ENCODE measurements at regions of chr2 and their contacts with region 1.

Region 1: GRCh38 chr2:68385220-68385906 is 20.3 kb downstream of the PLEK start:
- DNase-seq: peak; percentile 81
- ATAC-seq: peak; percentile 73
- H3K4me3 ChIP-seq: no peak overlapping the region
- H3K4me3 Mint-ChIP-seq: peak overlapping the region; percentile 58
- H3K27ac ChIP-seq: peak overlapping the region; percentile 95 to 98
- H3K27ac Mint-ChIP-seq: peak overlapping the region; percentile 92
- H3K4me1 ChIP-seq: peaks cover 75 to 84% of the 10 kb centered on the region in 2 donors
- H3K4me1 Mint-ChIP-seq: peaks cover 88% of the 10 kb centered on the region
- H3K27me3 ChIP-seq: no peaks in the 10 kb centered on the region
- H3K27me3 Mint-ChIP-seq: no peaks in the 10 kb centered on the region
- CTCF ChIP-seq: no peak

Region 2: DNA sequence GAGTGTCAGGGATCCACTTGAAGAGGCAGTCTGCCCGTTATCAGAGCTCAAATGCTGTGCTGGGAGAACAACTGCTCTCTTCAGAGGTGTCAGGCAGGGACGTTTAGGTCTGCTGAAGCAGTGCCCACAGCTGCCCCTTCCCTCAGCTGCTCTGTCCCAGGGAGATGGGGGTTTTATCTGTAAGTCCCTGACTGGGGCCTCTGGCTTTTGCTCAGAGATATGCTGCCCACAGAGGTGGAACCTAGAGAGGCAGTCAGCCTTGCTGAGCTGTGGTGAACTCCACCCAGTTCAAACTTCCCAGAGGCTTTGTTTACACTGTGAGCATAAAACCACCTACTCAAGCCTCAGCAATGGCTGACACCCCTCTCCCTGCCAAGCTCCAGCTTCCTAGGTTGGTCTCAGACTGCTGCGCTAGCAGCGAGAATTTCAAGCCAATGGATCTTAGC is 17.9 kb after region 1 on chr2:
- CTCF ChIA-PET with region 1: interaction called, 21 read pairs
- POLR2A ChIA-PET with region 1: interaction called, 9 read pairs
- intact Hi-C with region 1: no loop called
- DNase-seq: peak; percentile 73
- ATAC-seq: peak; percentile 81
- H3K4me3 ChIP-seq: peak overlapping the region in 1 of 5 experiments; percentile 38
- H3K4me3 Mint-ChIP-seq: peak overlapping the region; percentile 70
- H3K27ac ChIP-seq: peak overlapping the region; percentile 76 to 86
- H3K27ac Mint-ChIP-seq: peak overlapping the region; percentile 95
- H3K4me1 ChIP-seq: peaks cover 37 to 48% of the 10 kb centered on the region in 2 donors
- H3K4me1 Mint-ChIP-seq: peaks cover 88% of the 10 kb centered on the region
- H3K27me3 ChIP-seq: no peaks in the 10 kb centered on the region
- H3K27me3 Mint-ChIP-seq: no peaks in the 10 kb centered on the region
- CTCF ChIP-seq: no peak

Region 3: DNA sequence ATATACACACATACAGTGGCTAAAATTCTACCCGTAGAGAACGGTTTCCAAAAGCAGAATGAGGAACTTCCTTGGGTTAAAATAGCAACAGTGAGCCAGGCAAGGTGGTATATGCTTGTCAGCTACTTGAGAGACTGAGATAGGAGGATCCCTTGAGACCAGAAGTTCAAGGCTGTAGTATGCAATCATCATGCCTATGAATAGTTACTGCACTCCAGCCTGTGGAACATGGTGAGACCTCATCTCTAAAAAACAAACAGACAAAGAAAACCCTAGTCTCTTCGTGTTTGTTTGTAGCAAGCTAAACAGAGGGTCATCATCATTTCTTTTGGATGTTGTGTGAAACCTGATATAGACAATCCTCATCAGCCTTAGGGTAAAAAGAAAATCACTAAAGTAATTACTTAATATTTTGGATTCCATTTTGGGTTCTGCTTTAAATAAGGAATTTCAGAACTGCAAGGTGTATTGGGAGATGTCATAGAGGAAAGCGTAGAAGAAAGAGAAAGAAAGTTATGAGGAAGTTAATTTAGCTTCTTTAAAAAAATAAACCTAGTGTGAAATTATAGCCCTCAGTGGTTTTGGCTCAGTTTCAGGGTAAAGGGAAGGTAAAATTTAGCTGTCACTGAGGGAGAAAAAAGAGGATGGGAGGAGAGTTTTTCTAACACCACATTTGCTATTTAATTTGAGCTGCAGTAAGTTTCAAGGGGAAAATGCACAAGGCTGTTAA is 26.2 kb after region 1 on chr2:
- CTCF ChIA-PET with region 1: interaction called, 5 read pairs
- POLR2A ChIA-PET with region 1: interaction called, 4 read pairs
- intact Hi-C with region 1: loop called (anchors 1 kb)
- DNase-seq: peak; percentile 79
- ATAC-seq: peak; percentile 97
- H3K4me3 ChIP-seq: peak overlapping the region; percentile 24 to 60 (median 45)
- H3K4me3 Mint-ChIP-seq: peak overlapping the region; percentile 78
- H3K27ac ChIP-seq: peak overlapping the region; percentile 83 to 87
- H3K27ac Mint-ChIP-seq: peak overlapping the region; percentile 83
- H3K4me1 ChIP-seq: peaks cover 59 to 66% of the 10 kb centered on the region in 2 donors
- H3K4me1 Mint-ChIP-seq: peaks cover 91% of the 10 kb centered on the region
- H3K27me3 ChIP-seq: no peaks in the 10 kb centered on the region
- H3K27me3 Mint-ChIP-seq: no peaks in the 10 kb centered on the region
- CTCF ChIP-seq: no peak

Region 4: DNA sequence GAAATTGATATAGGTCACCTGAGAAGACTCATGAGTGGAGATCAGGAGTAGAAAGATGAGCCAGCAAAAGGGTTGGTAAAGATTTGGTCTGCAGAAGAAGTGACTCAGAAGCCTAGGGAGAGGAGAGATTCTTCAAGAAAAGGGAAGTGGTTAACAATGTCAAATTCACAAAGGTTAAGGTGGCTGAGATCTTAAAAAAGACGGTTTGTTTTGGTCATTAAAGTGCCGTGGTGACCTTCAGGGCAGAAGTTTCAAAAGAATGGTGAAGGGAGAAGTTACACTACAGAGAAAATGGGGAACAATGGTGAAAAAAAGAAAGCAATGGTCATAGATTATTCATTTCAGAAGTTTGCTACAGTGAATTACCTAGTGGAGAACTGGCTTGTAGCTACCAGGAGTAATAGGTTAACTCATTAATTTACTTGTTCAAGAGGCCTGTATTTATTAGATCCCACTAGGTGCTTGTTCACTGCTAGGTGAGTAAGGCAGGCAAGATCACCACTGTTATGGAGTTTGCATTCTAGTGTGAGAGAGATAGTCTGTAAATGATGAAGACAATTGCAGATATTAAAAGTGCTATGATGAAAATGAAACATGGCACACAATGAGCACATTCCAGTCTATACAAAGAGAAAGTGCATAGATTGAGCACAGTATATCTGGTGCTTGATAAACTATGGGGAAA is 38.7 kb after region 1 on chr2:
- CTCF ChIA-PET with region 1: interaction called, 3 read pairs
- POLR2A ChIA-PET with region 1: interaction called, 3 read pairs
- intact Hi-C with region 1: loop called (anchors 1 kb)
- DNase-seq: peak; percentile 74
- ATAC-seq: peak; percentile 81
- H3K4me3 ChIP-seq: peak overlapping the region in 2 of 5 experiments; percentile 3 to 29
- H3K4me3 Mint-ChIP-seq: no peak overlapping the region
- H3K27ac ChIP-seq: peak overlapping the region; percentile 37 to 54
- H3K27ac Mint-ChIP-seq: no peak overlapping the region
- H3K4me1 ChIP-seq: peaks cover 78 to 82% of the 10 kb centered on the region in 2 donors
- H3K4me1 Mint-ChIP-seq: peaks cover 57% of the 10 kb centered on the region
- H3K27me3 ChIP-seq: no peaks in the 10 kb centered on the region
- H3K27me3 Mint-ChIP-seq: no peaks in the 10 kb centered on the region
- CTCF ChIP-seq: no peak

Region 5: GRCh38 chr2:68448671-68449653 is 63.6 kb after region 1 on chr2:
- CTCF ChIA-PET with region 1: no interaction called
- POLR2A ChIA-PET with region 1: no interaction called
- intact Hi-C with region 1: no loop called
- DNase-seq: no peak
- ATAC-seq: peak; percentile 53
- H3K4me3 ChIP-seq: no peak overlapping the region
- H3K4me3 Mint-ChIP-seq: no peak overlapping the region
- H3K27ac ChIP-seq: no peak overlapping the region
- H3K27ac Mint-ChIP-seq: no peak overlapping the region
- H3K4me1 ChIP-seq: no peaks in the 10 kb centered on the region
- H3K4me1 Mint-ChIP-seq: no peaks in the 10 kb centered on the region
- H3K27me3 ChIP-seq: no peaks in the 10 kb centered on the region
- H3K27me3 Mint-ChIP-seq: no peaks in the 10 kb centered on the region
- CTCF ChIP-seq: no peak